PC-3 (cell line): ENCODE measurements at regions of chr3 and their contacts with region 1.

Region 1: GRCh38 chr3:166304556-166304955 is 467.3 kb upstream of the BCHE start:
- DNase-seq: peak; percentile 67
- ATAC-seq: peak; percentile 52
- H3K4me3 ChIP-seq: no peak overlapping the region
- H3K27ac ChIP-seq: no peak overlapping the region
- H3K4me1 ChIP-seq: peaks cover 22% of the 10 kb centered on the region
- H3K27me3 ChIP-seq: no peaks in the 10 kb centered on the region
- CTCF ChIP-seq: peak; percentile 55

Region 2: GRCh38 chr3:166190360-166190759 is 114.2 kb before region 1 on chr3:
- CTCF ChIA-PET with region 1: no interaction called
- POLR2A ChIA-PET with region 1: no interaction called
- intact Hi-C with region 1: loop called (anchors 5 kb)
- DNase-seq: peak; percentile 77
- ATAC-seq: peak; percentile 90
- H3K4me3 ChIP-seq: no peak overlapping the region
- H3K27ac ChIP-seq: peak overlapping the region; percentile 54
- H3K4me1 ChIP-seq: peaks cover 19% of the 10 kb centered on the region
- H3K27me3 ChIP-seq: no peaks in the 10 kb centered on the region
- CTCF ChIP-seq: peak; percentile 35; the same call in 1 of the 2 replicates